ENCODE measurements at regions of chr7 and their contacts with region 1.

Region 1: DNA sequence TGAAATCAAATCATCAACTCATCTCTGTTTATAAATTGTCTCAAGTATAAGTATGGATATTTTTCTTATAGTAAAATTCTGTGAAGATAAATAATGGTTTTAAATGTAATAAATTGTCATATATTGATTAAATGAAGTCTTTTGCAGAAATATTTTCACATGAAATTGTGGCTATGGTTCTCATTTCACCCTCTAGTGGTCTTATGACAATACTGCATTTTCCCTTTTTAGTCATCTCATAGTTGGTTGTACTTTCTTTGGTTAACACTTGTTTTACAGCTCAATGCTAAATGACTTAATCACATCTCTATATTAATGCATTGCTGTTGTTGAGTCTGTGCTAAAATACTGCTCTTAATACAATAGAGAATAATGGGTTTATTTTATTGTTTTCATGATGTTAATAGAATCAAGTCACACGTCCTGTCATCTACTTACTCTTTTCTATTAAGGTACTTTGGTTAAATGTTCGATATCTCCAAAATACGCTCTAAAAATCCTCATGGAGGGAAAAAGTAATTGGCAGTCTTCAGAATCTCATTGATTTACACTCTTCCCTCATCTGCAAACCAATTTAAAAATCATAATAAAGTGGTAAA is 38.0 kb upstream of the CACNA2D1 start:
- DNase-seq: no peak
- H3K4me3 ChIP-seq: no peak overlapping the region
- H3K27ac ChIP-seq: no peak overlapping the region
- H3K4me1 ChIP-seq: no peaks in the 10 kb centered on the region
- H3K27me3 ChIP-seq: no peaks in the 10 kb centered on the region
- CTCF ChIP-seq: peak in 2 of 3 experiments; percentile 36 to 61; a peak in 2 of 4 replicates
- EP300 ChIP-seq: no peak
- POLR2A ChIP-seq: no peak
- RAD21 ChIP-seq: peak; percentile 48 to 53

Region 2: GRCh38 chr7:82494420-82494819 is 12.8 kb after region 1 on chr7:
- CTCF ChIA-PET with region 1: interaction called, 12 read pairs
- POLR2A ChIA-PET with region 1: no interaction called
- DNase-seq: no peak
- H3K4me3 ChIP-seq: no peak overlapping the region
- H3K27ac ChIP-seq: no peak overlapping the region
- H3K4me1 ChIP-seq: no peaks in the 10 kb centered on the region
- H3K27me3 ChIP-seq: peaks cover 0 to 1% (median 0%) of the 10 kb centered on the region in 4 experiments; a peak in 1 of 7 replicates
- CTCF ChIP-seq: no peak
- EP300 ChIP-seq: no peak
- POLR2A ChIP-seq: no peak
- RAD21 ChIP-seq: no peak